Heart left ventricle (tissue), 16 donors: ENCODE measurements at regions of chr3 and their contacts with region 1.

Region 1: GRCh38 chr3:82133070-82133606 is 371.7 kb upstream of the GBE1 start:
- DNase-seq: peak; percentile 46 to 60 (median 57)
- ATAC-seq: peak in 3 of 4 donors; percentile 81 to 82 (median 82)
- H3K4me3 ChIP-seq: no peak overlapping the region
- H3K27ac ChIP-seq: no peak overlapping the region
- H3K4me1 ChIP-seq: no peaks in the 10 kb centered on the region
- H3K27me3 ChIP-seq: no peaks in the 10 kb centered on the region
- CTCF ChIP-seq: peak; percentile 77 to 92 (median 84)
- POLR2A ChIP-seq: no peak

Region 2: GRCh38 chr3:81302045-81302444 is 831.1 kb before region 1 on chr3:
- intact Hi-C with region 1: loop called in 1 of 10 experiments (anchors 5 kb)
- DNase-seq: peak in 1 of 5 donors; percentile 12
- ATAC-seq: peak in 3 of 4 donors; percentile 48 to 72 (median 63)
- H3K4me3 ChIP-seq: no peak overlapping the region
- H3K27ac ChIP-seq: no peak overlapping the region
- H3K4me1 ChIP-seq: no peaks in the 10 kb centered on the region
- H3K27me3 ChIP-seq: no peaks in the 10 kb centered on the region
- CTCF ChIP-seq: peak; percentile 39 to 71 (median 58)
- POLR2A ChIP-seq: no peak

Region 3: DNA sequence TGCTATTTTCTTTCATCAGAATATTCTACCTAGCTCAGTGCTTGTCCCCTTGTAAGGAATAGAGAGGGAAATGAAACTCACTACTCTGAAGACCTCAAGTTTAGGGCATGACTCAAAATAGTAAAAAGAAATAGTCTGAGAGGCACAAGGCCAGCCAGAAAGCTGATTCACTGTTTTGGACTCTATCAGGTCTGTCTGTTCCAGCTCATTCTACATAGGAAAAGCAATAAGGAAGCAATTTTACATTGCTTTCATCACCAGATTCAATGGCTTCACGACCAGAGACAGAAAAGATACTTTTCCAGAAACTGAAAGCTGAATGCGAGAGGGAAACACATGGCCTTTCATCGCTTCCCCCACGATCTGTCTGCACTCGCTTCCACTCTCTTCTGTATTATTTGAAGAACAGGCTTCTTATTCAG is 647.7 kb before region 1 on chr3:
- intact Hi-C with region 1: loop called in 2 of 10 experiments (anchors 5 to 10 kb)
- DNase-seq: no peak
- ATAC-seq: peak; percentile 28 to 88 (median 76)
- H3K4me3 ChIP-seq: peak overlapping the region in 3 of 12 donors; percentile 10 to 25 (median 19)
- H3K27ac ChIP-seq: peak overlapping the region in 3 of 12 donors; percentile 11 to 40 (median 24)
- H3K4me1 ChIP-seq: peaks cover 0 to 24% (median 12%) of the 10 kb centered on the region in 12 donors
- H3K27me3 ChIP-seq: no peaks in the 10 kb centered on the region
- CTCF ChIP-seq: no peak
- POLR2A ChIP-seq: no peak

Region 4: DNA sequence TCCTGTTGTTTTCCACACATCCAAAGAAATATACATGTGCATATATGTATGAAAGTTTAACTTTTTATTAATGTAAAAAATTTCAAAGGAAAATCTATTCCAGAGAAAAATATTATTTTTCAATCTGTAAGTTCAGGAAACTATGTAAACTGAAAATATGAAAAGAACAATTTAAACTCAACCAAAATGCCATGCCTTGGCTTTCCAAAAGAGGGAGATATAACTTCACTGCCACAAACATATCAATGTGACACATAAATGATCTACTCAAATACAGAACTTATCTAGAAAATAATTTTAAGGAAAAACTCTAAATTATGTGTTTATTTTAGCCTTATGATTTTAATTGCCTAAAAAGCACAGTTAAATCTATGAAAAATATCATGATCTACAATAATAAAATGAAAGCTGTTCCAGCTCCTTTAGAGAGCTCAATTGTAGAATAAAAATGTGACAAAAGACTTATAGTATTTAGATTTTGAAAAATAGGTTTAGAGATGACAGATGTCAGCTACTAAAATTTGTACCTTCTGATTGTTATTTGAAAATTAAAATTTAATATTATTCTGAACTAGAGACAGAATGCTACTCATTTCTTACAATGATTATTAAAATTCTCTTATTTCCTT is 466.5 kb before region 1 on chr3:
- intact Hi-C with region 1: loop called in 9 of 10 experiments (anchors 2 to 10 kb)
- DNase-seq: no peak
- ATAC-seq: peak in 1 of 4 donors; percentile 44
- H3K4me3 ChIP-seq: no peak overlapping the region
- H3K27ac ChIP-seq: no peak overlapping the region
- H3K4me1 ChIP-seq: peaks cover 0 to 35% (median 12%) of the 10 kb centered on the region in 12 donors
- H3K27me3 ChIP-seq: no peaks in the 10 kb centered on the region
- CTCF ChIP-seq: peak; percentile 57 to 88 (median 78)
- POLR2A ChIP-seq: no peak

Region 5: GRCh38 chr3:81770710-81771109 is 362.4 kb before region 1 on chr3:
- intact Hi-C with region 1: no loop called
- DNase-seq: no peak
- ATAC-seq: no peak
- H3K4me3 ChIP-seq: no peak overlapping the region
- H3K27ac ChIP-seq: no peak overlapping the region
- H3K4me1 ChIP-seq: no peaks in the 10 kb centered on the region
- H3K27me3 ChIP-seq: no peaks in the 10 kb centered on the region
- CTCF ChIP-seq: no peak
- POLR2A ChIP-seq: no peak

Region 6: DNA sequence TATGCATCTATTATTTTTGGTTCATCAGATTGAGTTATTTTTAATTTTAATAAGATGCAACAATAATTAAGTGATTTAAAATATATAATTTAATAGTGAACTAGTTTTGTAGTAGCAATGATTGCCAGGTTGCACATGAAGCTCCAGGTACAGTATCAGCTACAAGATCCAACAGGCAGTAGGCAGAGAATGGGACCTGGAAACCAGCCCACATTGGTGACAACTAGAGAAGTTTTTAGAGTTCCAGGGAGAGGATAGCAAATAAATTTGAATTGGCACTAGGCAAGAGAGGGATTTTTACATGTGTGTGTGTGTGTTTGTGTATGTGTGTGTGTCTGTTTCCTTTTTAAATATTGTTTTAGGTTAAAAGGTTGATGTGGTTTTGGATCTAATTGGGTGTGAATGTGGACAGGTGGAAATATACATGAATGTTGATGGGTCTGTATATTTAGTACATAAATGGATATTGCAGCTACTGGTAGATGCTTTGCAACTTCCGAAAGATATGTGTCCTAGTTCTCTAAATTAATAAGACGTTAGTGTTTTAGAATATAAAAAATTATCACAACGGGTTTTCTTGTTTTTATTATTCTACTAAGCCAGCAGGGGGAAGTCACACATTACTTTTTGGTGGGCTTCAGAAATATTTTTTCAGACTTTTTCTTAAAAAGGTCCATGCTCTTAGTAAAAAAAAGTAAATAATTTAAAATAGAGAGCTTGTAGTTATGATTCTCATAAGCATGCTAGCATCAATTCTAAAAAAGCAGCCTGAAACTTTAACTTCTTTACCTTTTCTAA is 261.6 kb before region 1 on chr3:
- intact Hi-C with region 1: loop called in 6 of 10 experiments (anchors 5 to 10 kb)
- DNase-seq: no peak
- ATAC-seq: no peak
- H3K4me3 ChIP-seq: no peak overlapping the region
- H3K27ac ChIP-seq: no peak overlapping the region
- H3K4me1 ChIP-seq: peaks cover 0 to 4% (median 0%) of the 10 kb centered on the region in 12 donors
- H3K27me3 ChIP-seq: no peaks in the 10 kb centered on the region
- CTCF ChIP-seq: peak in 8 of 12 donors; percentile 5 to 45 (median 32)
- POLR2A ChIP-seq: no peak

Region 7: GRCh38 chr3:81998139-81998755 is 134.9 kb before region 1 on chr3:
- intact Hi-C with region 1: loop called in 1 of 10 experiments (anchors 5 kb)
- DNase-seq: peak in 1 of 5 donors; percentile 18
- ATAC-seq: peak in 1 of 4 donors; percentile 46
- H3K4me3 ChIP-seq: no peak overlapping the region
- H3K27ac ChIP-seq: no peak overlapping the region
- H3K4me1 ChIP-seq: peaks cover 0 to 21% (median 4%) of the 10 kb centered on the region in 12 donors
- H3K27me3 ChIP-seq: no peaks in the 10 kb centered on the region
- CTCF ChIP-seq: no peak
- POLR2A ChIP-seq: no peak

Region 8: GRCh38 chr3:82410374-82410773 is 277.2 kb after region 1 on chr3:
- intact Hi-C with region 1: no loop called
- DNase-seq: no peak
- ATAC-seq: no peak
- H3K4me3 ChIP-seq: no peak overlapping the region
- H3K27ac ChIP-seq: no peak overlapping the region
- H3K4me1 ChIP-seq: no peaks in the 10 kb centered on the region
- H3K27me3 ChIP-seq: no peaks in the 10 kb centered on the region
- CTCF ChIP-seq: no peak
- POLR2A ChIP-seq: no peak